ENCODE measurements at regions of chr7 and their contacts with region 1.

Region 1: DNA sequence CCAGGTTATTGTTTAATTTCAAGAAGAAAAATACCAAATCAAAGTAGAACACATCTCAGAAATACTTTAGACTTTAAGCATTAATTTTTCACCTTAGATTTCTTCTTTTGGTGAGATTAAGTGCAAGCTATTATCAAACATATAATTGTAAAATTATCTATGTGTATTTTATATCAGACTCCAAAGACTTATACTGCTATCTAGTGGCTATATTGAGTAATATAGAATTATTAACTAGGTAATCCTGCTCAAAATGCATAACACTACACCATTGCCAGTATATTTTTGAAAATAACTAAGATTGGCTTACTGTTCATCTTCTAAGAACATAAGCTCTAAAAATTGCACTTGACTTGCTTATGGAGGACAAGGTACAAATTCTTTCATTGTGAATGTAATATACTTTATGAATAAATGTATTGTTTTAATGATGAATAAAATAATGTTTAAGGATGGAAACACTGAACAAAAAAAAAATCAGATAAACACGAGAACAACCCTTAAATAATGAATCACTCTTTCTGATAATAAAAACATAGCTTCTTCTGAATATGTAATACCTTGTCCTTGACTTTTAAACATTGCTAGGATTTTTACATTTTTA is 86.7 kb upstream of the GNAI1 start:
- DNase-seq: no peak
- ATAC-seq: no peak
- H3K4me3 ChIP-seq: no peak overlapping the region
- H3K4me3 Mint-ChIP-seq: no peak overlapping the region
- H3K27ac ChIP-seq: no peak overlapping the region
- H3K27ac Mint-ChIP-seq: no peak overlapping the region
- H3K4me1 ChIP-seq: no peaks in the 10 kb centered on the region
- H3K4me1 Mint-ChIP-seq: no peaks in the 10 kb centered on the region
- H3K27me3 ChIP-seq: no peaks in the 10 kb centered on the region
- H3K27me3 Mint-ChIP-seq: no peaks in the 10 kb centered on the region
- CTCF ChIP-seq: no peak

Region 2: DNA sequence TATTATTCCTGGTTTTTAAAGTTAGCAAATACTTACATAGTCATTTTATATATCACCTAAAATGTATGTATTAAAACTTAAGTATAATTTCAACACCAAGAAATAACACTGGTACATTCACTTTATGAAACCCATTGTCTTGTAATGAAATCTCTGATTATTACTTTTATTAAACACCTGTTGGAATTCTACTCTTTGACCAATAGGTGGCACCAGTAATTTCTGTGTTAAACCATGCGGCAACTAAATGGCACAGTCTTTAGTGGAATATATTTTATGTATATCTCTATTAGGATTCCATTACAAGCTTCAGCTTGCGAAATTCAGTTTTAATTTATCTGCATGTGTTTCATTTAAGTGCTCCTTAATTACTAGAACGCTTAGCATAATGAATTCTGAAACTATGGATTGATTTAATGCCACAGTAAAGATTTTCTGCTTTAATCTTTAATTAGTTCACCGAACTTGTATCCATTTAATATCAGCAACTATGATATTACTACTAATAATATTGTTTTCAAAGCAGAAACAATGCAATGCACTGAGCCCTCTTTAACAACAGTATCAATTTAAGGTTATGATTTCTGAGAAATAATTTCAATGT is 775.8 kb before region 1 on chr7:
- CTCF ChIA-PET with region 1: no interaction called
- POLR2A ChIA-PET with region 1: no interaction called
- intact Hi-C with region 1: loop called (anchors 1 to 2 kb)
- DNase-seq: peak in 1 of 9 experiments; percentile 26
- ATAC-seq: no peak
- H3K4me3 ChIP-seq: no peak overlapping the region
- H3K4me3 Mint-ChIP-seq: no peak overlapping the region
- H3K27ac ChIP-seq: no peak overlapping the region
- H3K27ac Mint-ChIP-seq: no peak overlapping the region
- H3K4me1 ChIP-seq: no peaks in the 10 kb centered on the region
- H3K4me1 Mint-ChIP-seq: no peaks in the 10 kb centered on the region
- H3K27me3 ChIP-seq: no peaks in the 10 kb centered on the region
- H3K27me3 Mint-ChIP-seq: no peaks in the 10 kb centered on the region
- CTCF ChIP-seq: peak; percentile 57

Region 3: GRCh38 chr7:79298145-79298760 is 749.7 kb before region 1 on chr7:
- CTCF ChIA-PET with region 1: interaction called, 4 read pairs
- POLR2A ChIA-PET with region 1: no interaction called
- intact Hi-C with region 1: loop called (anchors 5 kb)
- DNase-seq: peak in 2 of 9 experiments; percentile 3 to 14
- ATAC-seq: no peak
- H3K4me3 ChIP-seq: no peak overlapping the region
- H3K4me3 Mint-ChIP-seq: no peak overlapping the region
- H3K27ac ChIP-seq: no peak overlapping the region
- H3K27ac Mint-ChIP-seq: no peak overlapping the region
- H3K4me1 ChIP-seq: no peaks in the 10 kb centered on the region
- H3K4me1 Mint-ChIP-seq: no peaks in the 10 kb centered on the region
- H3K27me3 ChIP-seq: no peaks in the 10 kb centered on the region
- H3K27me3 Mint-ChIP-seq: no peaks in the 10 kb centered on the region
- CTCF ChIP-seq: peak; percentile 53

Region 4: DNA sequence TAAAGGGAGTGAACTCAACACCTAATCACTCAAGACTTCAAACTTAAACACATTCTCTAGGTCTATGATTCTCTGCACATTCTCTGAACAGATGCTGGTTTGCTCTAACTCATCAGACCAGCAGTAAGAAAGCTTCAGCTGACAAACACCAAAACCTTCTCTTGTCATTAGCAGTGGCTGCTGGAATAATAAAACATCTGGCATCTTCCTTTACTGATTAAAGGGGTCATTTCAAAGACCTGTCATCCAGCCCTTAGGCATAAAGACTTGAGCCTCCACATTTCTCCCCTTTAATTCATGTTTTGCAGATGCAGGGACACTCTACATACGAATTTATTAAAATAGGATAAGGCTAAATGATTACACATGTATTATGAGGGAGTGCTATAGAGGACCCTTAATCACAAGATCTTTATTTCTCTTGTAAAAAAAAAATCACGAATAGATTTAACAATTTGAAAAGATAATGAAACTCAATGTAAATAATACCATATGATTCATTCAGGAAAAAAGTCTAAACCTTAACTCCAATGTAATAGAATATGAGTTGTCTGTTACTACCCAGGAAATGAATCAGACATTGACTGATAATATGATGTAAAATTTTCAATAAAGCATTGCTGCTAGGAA is 65.7 kb before region 1 on chr7:
- CTCF ChIA-PET with region 1: no interaction called
- POLR2A ChIA-PET with region 1: no interaction called
- intact Hi-C with region 1: loop called in 1 of 2 experiments (anchors 10 kb)
- DNase-seq: no peak
- ATAC-seq: no peak
- H3K4me3 ChIP-seq: no peak overlapping the region
- H3K4me3 Mint-ChIP-seq: no peak overlapping the region
- H3K27ac ChIP-seq: no peak overlapping the region
- H3K27ac Mint-ChIP-seq: no peak overlapping the region
- H3K4me1 ChIP-seq: no peaks in the 10 kb centered on the region
- H3K4me1 Mint-ChIP-seq: no peaks in the 10 kb centered on the region
- H3K27me3 ChIP-seq: no peaks in the 10 kb centered on the region
- H3K27me3 Mint-ChIP-seq: no peaks in the 10 kb centered on the region
- CTCF ChIP-seq: no peak

Region 5: DNA sequence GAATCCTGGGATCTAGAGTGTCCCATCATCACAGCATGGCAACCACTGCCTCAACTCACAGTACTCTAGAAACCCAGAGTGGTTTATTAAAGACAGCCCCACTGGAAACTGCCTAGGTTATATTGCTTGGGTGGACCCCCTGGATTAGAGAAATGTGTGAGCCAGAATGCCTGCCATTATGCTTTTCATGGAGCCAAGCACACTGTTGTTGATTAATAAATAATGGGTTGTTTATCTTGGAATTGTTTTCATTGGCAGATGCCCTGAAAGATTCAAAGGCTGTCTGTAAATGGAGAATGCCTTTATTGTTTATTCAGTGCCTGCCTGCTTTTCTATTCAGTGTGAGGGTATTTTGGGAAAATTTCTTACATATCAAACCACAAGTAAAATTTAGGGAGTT is 138.8 kb after region 1 on chr7:
- CTCF ChIA-PET with region 1: no interaction called
- POLR2A ChIA-PET with region 1: no interaction called
- intact Hi-C with region 1: no loop called
- DNase-seq: no peak
- ATAC-seq: no peak
- H3K4me3 ChIP-seq: no peak overlapping the region
- H3K4me3 Mint-ChIP-seq: no peak overlapping the region
- H3K27ac ChIP-seq: no peak overlapping the region
- H3K27ac Mint-ChIP-seq: no peak overlapping the region
- H3K4me1 ChIP-seq: no peaks in the 10 kb centered on the region
- H3K4me1 Mint-ChIP-seq: peaks cover 2% of the 10 kb centered on the region
- H3K27me3 ChIP-seq: no peaks in the 10 kb centered on the region
- H3K27me3 Mint-ChIP-seq: no peaks in the 10 kb centered on the region
- CTCF ChIP-seq: no peak

Region 6: GRCh38 chr7:80552304-80552703 is 504.3 kb after region 1 on chr7:
- CTCF ChIA-PET with region 1: no interaction called
- POLR2A ChIA-PET with region 1: no interaction called
- intact Hi-C with region 1: no loop called
- DNase-seq: no peak
- ATAC-seq: no peak
- H3K4me3 ChIP-seq: no peak overlapping the region
- H3K4me3 Mint-ChIP-seq: no peak overlapping the region
- H3K27ac ChIP-seq: no peak overlapping the region
- H3K27ac Mint-ChIP-seq: no peak overlapping the region
- H3K4me1 ChIP-seq: no peaks in the 10 kb centered on the region
- H3K4me1 Mint-ChIP-seq: no peaks in the 10 kb centered on the region
- H3K27me3 ChIP-seq: no peaks in the 10 kb centered on the region
- H3K27me3 Mint-ChIP-seq: no peaks in the 10 kb centered on the region
- CTCF ChIP-seq: no peak